PC-9 (cell line): ENCODE measurements at regions of chr11 and their contacts with region 1.

Region 1: DNA sequence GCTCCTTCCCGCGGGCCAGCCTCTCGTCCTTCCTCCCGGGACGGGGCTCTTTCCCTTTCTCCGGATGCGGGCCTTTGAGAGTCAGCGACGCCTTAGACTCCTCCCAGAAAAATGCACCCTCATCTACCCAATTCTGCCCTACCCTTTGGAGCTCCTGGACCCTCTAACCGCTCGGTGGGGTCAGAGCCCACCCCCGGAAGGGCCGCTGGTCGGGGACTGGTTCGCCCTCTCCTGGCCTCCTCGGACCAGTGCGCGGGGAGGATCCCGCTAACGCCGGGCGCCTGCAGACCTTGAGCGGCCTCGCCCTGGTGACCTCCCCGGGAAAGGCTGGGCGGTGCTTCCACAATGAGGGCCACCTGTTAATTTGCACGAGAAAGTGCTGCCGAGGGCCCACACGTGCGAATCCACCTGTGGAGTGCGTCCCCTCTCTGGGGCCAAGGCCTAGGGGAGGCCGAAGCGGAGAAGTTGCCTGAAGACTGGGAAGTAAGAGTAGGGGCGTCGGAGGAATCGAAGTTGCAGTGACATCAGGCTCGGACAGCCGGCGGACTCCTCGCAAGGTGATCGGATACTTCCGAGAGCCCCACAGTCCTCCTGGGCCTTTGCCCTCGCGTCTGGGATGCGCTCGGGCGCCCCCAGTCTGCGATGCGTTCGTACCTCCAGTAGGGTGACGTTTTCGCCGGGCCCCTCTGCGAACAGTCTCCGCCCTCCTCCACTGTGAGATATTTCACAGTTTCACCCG is 61.5 kb downstream of the ENDOD1 start:
- DNase-seq: peak; percentile 93 to 94
- H3K4me3 ChIP-seq: peak overlapping the region; percentile 67
- H3K27ac ChIP-seq: peak overlapping the region; percentile 60
- H3K4me1 ChIP-seq: peaks cover 31% of the 10 kb centered on the region
- H3K27me3 ChIP-seq: no peaks in the 10 kb centered on the region
- CTCF ChIP-seq: no peak; the same call in 1 of the 2 replicates

Region 2: DNA sequence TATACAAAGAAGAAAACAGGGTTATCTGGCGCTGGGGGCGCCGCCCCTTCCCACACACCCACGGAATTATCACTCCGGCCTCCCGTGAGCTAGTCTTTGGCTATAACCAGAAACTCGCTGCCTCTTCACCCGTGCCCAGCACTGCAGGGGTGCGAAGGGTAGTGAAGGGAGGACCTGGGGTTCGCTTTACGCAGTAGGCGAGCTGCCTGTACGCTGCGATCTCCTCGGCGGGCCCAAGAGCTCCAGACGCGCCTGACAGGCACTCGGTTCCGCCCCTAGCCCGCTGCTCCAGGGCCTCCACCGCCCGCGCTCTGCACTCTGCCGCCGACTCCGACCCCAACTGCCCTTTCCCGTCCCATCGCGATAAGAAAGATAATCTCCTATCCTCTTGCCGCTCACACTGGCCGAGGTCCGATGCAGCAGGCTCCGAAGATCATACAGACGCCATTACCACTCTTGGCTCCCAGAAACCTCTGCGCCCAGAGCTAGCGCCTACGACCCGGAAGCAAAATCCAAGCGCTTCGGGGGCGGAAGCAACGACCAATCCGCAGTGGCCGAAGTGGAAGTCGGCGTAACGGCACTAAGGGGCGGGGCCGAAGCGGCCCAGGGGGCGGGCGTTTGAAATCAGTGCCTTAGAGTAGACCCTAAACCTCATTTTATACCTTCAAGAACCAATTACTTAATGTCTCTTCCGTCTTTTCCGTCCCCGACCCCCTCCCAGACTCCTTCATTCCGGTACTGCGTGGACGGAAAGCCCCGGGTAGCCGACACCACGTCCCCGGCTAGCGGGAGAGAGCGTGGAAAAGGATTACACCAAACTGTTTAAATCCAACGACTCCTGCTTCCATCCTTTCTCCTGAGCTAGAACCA is 177.8 kb before region 1 on chr11 and contains the starts of genes CWC15 and KDM4D:
- CTCF ChIA-PET with region 1: interaction called, 3 read pairs
- POLR2A ChIA-PET with region 1: no interaction called
- intact Hi-C with region 1: loop called (anchors 1 kb)
- DNase-seq: peak; percentile 88 to 91
- H3K4me3 ChIP-seq: peak within 1 kb of the TSS; percentile 76
- H3K27ac ChIP-seq: peak within 1 kb of the TSS; percentile 44
- H3K4me1 ChIP-seq: peaks cover 11% of the 10 kb centered on the region
- H3K27me3 ChIP-seq: no peaks in the 10 kb centered on the region
- CTCF ChIP-seq: no peak
- total RNA-seq, gene CWC15: 50.9 and 54.2 TPM in 2 replicates
- total RNA-seq, gene KDM4D: 0.85 and 1.1 TPM in 2 replicates

Region 3: DNA sequence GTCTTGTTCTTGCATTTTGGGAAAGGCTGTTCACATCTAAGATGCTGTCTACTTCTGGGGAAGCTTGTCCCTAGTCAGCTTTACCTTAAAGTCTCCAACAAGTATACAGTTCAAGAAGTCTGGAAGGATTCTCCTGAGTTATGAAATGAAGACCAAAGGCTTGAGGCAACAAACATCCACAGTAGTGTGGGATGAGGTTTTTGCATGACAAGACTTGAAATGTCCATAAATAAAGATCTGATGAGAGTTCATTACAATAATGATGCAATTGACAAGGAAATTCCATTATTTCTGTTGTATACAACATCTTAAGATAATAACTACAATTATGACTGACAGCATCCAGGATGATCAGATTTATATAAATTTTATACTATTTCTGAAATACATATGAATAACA is 147.4 kb before region 1 on chr11:
- CTCF ChIA-PET with region 1: no interaction called
- POLR2A ChIA-PET with region 1: no interaction called
- intact Hi-C with region 1: no loop called
- DNase-seq: no peak
- H3K4me3 ChIP-seq: no peak overlapping the region
- H3K27ac ChIP-seq: no peak overlapping the region
- H3K4me1 ChIP-seq: no peaks in the 10 kb centered on the region
- H3K27me3 ChIP-seq: no peaks in the 10 kb centered on the region
- CTCF ChIP-seq: no peak

Region 4: DNA sequence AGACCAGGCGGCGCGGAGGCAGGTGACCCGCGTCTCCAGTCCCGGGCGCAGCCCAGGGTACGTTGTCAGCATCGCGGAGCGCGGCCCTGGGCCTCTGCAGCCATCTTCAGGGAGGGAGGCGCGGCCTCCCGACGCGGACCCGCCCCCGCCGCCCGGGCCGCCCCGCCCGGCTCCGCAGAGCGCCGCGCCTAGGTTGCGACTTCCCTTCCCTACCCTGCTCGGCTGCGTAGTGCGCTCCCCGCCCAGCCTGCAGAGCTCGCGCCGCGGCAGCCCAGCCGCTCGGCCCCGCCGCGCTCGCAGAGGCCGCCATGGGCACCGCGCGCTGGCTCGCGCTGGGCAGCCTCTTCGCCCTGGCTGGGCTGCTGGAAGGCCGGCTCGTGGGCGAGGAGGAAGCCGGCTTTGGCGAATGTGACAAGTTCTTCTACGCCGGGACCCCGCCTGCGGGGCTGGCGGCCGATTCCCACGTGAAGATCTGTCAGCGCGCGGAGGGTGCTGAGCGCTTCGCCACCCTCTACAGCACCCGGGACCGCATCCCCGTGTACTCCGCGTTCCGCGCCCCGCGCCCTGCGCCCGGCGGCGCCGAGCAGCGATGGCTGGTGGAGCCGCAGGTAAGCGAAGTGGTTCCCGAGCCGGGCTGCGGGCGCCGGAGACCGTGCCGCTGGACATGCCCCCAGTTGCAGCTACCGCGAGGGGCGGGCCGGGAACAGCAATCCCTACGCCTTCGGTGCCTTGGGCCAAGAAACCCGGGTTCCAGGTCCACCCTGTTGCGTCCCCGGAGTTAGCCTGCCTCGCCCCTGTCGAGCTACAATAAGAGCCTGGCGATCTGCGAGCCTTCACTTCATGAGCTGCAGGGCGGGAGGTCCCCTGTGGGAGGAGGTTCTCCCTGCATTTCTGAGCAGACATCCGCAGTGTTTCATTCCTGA is 61.2 kb before region 1 on chr11 and contains the start of gene ENDOD1:
- CTCF ChIA-PET with region 1: no interaction called
- POLR2A ChIA-PET with region 1: no interaction called
- intact Hi-C with region 1: loop called (anchors 1 kb)
- DNase-seq: peak; percentile 68 to 81
- H3K4me3 ChIP-seq: peak within 1 kb of the TSS; percentile 93
- H3K27ac ChIP-seq: peak within 1 kb of the TSS; percentile 24; the same call in 1 of the 2 replicates
- H3K4me1 ChIP-seq: peaks cover 41% of the 10 kb centered on the region
- H3K27me3 ChIP-seq: no peaks in the 10 kb centered on the region
- CTCF ChIP-seq: peak; percentile 27; the same call in 1 of the 2 replicates
- total RNA-seq, gene ENDOD1: 8.0 and 8.1 TPM in 2 replicates

Region 5: DNA sequence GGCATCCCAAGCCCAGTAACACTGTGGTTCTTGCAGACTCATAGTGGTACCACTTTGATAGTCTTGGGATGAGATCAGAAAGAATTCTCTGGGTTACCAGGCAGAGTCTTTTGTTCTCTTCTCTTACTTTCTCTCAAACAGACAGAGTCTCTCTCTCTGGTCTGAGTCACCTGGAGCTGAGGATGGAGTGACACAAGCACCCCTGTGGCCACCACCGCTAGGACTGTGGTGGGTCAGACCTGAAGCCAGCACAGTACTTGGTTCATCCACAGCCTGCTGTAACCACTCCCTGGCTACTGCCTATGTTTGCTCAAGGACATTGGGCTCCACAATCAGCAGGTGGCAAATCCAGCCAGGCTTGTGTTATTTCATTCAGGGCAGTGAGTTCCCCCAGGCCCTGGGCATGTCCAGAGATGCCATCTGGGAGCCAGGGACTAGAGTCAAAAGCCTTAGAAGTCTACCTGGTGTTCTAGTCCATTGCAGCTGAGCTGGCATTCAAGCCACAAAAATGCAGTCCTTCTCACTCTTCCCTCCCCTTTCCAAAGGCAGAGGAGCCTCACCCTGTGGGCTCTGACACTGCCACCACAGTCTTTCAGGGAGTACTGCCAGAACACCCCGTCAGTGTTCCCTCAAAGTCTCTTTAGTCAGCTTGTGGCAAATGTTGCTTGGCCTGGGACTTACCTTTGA is 31.6 kb before region 1 on chr11:
- CTCF ChIA-PET with region 1: no interaction called
- POLR2A ChIA-PET with region 1: no interaction called
- intact Hi-C with region 1: loop called (anchors 1 kb)
- DNase-seq: peak; percentile 73 to 87
- H3K4me3 ChIP-seq: no peak overlapping the region
- H3K27ac ChIP-seq: no peak overlapping the region
- H3K4me1 ChIP-seq: peaks cover 12% of the 10 kb centered on the region
- H3K27me3 ChIP-seq: no peaks in the 10 kb centered on the region
- CTCF ChIP-seq: no peak

Region 6: DNA sequence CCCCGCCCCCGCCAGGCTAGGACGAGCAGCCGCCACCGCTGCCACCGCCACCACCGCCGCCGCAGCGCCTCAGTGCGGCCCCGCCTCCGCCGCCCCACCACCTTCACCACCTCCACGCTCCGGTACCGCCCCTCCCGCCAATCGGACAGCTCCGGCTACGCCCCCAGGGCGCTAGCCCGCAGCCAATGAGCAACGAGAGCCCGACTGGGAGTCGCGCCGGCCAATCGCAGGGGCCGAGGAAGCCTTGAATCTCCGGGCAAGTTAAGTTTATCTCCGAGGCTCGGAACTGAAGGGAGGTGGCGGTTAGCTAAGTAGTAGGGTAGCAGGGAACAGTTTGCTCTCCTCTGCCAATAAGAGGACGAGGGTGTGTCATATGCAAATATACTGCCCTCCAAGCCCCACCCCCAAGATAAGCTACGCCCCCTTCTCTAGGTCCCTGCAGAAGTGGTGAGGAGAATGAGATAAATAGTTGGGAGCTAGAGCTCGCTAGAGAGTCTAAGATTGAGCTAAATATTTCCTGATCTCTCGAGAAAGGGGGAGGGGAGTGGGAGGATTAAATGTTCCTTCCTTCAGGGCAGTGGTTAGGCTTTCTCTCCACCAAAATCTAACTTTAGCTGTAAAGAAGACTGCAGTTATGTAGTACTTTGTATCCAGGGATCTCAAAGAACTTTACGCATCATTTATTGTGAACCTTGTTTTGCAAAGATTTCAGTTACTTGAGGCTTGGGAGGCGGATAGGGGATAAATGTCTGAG is 80.2 kb after region 1 on chr11 and contains the start of gene SESN3:
- CTCF ChIA-PET with region 1: interaction called, 3 read pairs
- POLR2A ChIA-PET with region 1: no interaction called
- intact Hi-C with region 1: loop called (anchors 2 kb)
- DNase-seq: peak; percentile 90 to 91
- H3K4me3 ChIP-seq: peak within 1 kb of the TSS; percentile 52
- H3K27ac ChIP-seq: no peak within 1 kb of the TSS
- H3K4me1 ChIP-seq: no peaks in the 10 kb centered on the region; the same call in 1 of the 2 replicates
- H3K27me3 ChIP-seq: peaks cover 26% of the 10 kb centered on the region; the same call in 1 of the 2 replicates
- CTCF ChIP-seq: no peak
- total RNA-seq, gene SESN3: 0.45 and 0.85 TPM in 2 replicates

Region 7: DNA sequence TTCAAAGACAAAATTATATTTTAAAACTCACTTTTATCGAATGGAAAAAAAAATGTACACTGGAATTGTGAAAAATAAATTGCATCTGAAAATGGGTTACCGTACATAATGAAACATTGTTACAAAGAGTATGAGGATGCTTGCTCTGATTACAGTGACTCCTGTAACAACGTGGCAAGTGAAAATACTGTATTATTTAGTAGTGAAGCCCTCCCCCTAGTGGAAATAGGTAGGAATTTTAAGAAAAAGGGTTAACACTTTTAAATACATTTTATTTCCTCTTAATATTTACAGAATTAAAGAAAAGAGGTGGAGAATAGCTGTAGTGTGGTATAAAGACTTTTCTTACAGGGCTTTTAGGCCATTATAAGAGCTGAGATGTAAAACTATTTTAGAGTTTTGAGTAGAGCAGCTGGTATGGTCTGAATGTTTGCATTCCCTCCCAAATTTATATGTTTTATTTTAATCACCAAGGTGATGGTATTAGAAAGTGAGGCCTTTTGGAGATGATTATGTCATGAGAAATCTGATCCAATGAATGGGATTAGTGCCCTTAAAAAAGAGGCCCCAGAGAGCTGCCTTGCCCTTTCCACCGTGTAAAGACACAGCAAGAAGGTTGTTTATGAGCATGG is 613.3 kb after region 1 on chr11:
- CTCF ChIA-PET with region 1: interaction called, 3 read pairs
- POLR2A ChIA-PET with region 1: interaction called, 5 read pairs
- intact Hi-C with region 1: loop called (anchors 2 kb)
- DNase-seq: peak in 1 of 2 experiments; percentile 59
- H3K4me3 ChIP-seq: no peak overlapping the region
- H3K27ac ChIP-seq: no peak overlapping the region
- H3K4me1 ChIP-seq: peaks cover 8% of the 10 kb centered on the region; the same call in 1 of the 2 replicates
- H3K27me3 ChIP-seq: no peaks in the 10 kb centered on the region
- CTCF ChIP-seq: peak; percentile 93